Heart left ventricle (tissue), 16 donors: ENCODE measurements at regions of chr9 and their contacts with region 1.

Region 1: GRCh38 chr9:75088260-75088905 is at the start of gene OSTF1:
- DNase-seq: peak; percentile 97 to 98 (median 97)
- ATAC-seq: peak; percentile 91 to 98 (median 94)
- H3K4me3 ChIP-seq: peak within 1 kb of the TSS; percentile 78 to 99 (median 95)
- H3K27ac ChIP-seq: peak within 1 kb of the TSS; percentile 81 to 99 (median 96)
- H3K4me1 ChIP-seq: peaks cover 0 to 80% (median 40%) of the 10 kb centered on the region in 12 donors
- H3K27me3 ChIP-seq: no peaks in the 10 kb centered on the region
- CTCF ChIP-seq: peak in 1 of 12 donors; percentile 23
- POLR2A ChIP-seq: peak; percentile 64 to 90
- total RNA-seq, gene OSTF1: 16.7 to 53.6 (median 23.9) TPM

Region 2: GRCh38 chr9:75027187-75028107 is 60.9 kb before region 1 on chr9:
- intact Hi-C with region 1: loop called in 2 of 10 experiments (anchors 5 kb)
- DNase-seq: peak; percentile 60 to 85 (median 71)
- ATAC-seq: peak; percentile 38 to 80 (median 68)
- H3K4me3 ChIP-seq: peak overlapping the region; percentile 49 to 93 (median 77)
- H3K27ac ChIP-seq: peak overlapping the region; percentile 80 to 98 (median 94)
- H3K4me1 ChIP-seq: peaks cover 0 to 28% (median 13%) of the 10 kb centered on the region in 12 donors
- H3K27me3 ChIP-seq: no peaks in the 10 kb centered on the region
- CTCF ChIP-seq: peak in 2 of 12 donors; percentile 6 to 14
- POLR2A ChIP-seq: no peak

Region 3: GRCh38 chr9:75185585-75186170 is 97.3 kb after region 1 on chr9:
- intact Hi-C with region 1: loop called in 1 of 10 experiments (anchors 10 kb)
- DNase-seq: peak in 1 of 5 donors; percentile 25
- ATAC-seq: no peak
- H3K4me3 ChIP-seq: no peak overlapping the region
- H3K27ac ChIP-seq: no peak overlapping the region
- H3K4me1 ChIP-seq: no peaks in the 10 kb centered on the region
- H3K27me3 ChIP-seq: no peaks in the 10 kb centered on the region
- CTCF ChIP-seq: peak; percentile 35 to 60 (median 42)
- POLR2A ChIP-seq: no peak